Breast epithelium (tissue), 4 donors: ENCODE measurements at regions of chr14 and their contacts with region 1.

Region 1: GRCh38 chr14:105248368-105248756 is at the start of gene BTBD6:
- DNase-seq: peak; percentile 74 to 82
- H3K4me3 ChIP-seq: peak within 1 kb of the TSS; percentile 51 to 88 (median 67)
- H3K27ac ChIP-seq: peak within 1 kb of the TSS; percentile 87 to 99
- H3K4me1 ChIP-seq: peaks cover 8 to 10% of the 10 kb centered on the region in 2 donors
- H3K27me3 ChIP-seq: no peaks in the 10 kb centered on the region
- CTCF ChIP-seq: no peak
- POLR2A ChIP-seq: no peak
- total RNA-seq, gene BTBD6: 37.0 to 86.1 (median 41.0) TPM

Region 2: DNA sequence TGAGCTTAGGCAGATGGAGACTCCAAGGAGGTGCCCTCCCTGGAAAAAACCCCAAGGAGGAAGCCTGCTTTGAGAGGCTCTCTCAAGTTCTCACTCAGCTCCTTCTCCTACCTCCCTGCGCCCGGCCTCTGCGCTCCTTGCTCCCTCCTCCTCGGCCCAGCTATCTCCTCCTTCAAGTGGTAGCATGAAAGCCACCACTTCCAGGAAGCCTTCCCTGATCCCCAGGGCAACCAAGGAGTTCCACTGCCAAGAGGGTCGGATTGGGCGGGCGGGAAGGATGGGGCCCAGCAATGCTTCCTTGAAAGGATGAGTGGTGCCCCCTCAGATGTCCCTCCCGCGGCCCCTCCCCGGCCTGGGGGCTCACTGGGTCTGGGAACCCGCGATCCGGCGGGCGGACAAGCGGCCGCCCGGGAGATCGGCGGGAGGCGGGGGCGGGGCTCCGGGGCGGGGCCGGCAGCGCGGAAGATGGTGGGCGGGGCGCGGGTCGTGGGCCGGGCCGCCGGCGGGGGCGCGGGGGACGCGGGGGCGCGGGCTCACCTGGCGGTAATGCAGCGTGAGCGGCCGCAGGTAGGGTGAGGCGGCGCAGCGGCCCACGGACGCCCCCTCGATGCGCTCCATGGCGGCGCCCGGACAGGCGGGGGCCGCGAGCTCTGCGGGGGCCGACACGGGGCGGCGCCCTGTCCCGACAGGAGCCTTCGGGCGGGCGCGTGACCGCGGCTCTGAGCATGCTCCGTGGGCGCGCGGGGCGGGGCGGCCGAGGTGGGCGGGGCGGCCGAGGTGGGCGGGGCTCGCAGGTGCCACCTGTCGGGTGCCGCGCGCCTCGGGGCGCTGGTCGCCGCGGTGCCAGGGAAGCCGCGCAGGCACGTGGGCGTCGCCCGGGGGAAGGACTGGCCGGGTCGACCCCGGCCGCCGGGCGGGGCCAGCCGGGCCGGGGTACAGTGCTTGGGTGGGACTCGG is 67.5 kb before region 1 on chr14 and contains the start of gene NUDT14:
- intact Hi-C with region 1: loop called (anchors 2 kb)
- DNase-seq: peak; percentile 83 to 89
- H3K4me3 ChIP-seq: peak within 1 kb of the TSS; percentile 37 to 83 (median 60)
- H3K27ac ChIP-seq: peak within 1 kb of the TSS; percentile 58 to 83
- H3K4me1 ChIP-seq: no peaks in the 10 kb centered on the region
- H3K27me3 ChIP-seq: no peaks in the 10 kb centered on the region
- CTCF ChIP-seq: no peak
- POLR2A ChIP-seq: no peak
- total RNA-seq, gene NUDT14: 13.6 to 14.9 (median 14.1) TPM

Region 3: DNA sequence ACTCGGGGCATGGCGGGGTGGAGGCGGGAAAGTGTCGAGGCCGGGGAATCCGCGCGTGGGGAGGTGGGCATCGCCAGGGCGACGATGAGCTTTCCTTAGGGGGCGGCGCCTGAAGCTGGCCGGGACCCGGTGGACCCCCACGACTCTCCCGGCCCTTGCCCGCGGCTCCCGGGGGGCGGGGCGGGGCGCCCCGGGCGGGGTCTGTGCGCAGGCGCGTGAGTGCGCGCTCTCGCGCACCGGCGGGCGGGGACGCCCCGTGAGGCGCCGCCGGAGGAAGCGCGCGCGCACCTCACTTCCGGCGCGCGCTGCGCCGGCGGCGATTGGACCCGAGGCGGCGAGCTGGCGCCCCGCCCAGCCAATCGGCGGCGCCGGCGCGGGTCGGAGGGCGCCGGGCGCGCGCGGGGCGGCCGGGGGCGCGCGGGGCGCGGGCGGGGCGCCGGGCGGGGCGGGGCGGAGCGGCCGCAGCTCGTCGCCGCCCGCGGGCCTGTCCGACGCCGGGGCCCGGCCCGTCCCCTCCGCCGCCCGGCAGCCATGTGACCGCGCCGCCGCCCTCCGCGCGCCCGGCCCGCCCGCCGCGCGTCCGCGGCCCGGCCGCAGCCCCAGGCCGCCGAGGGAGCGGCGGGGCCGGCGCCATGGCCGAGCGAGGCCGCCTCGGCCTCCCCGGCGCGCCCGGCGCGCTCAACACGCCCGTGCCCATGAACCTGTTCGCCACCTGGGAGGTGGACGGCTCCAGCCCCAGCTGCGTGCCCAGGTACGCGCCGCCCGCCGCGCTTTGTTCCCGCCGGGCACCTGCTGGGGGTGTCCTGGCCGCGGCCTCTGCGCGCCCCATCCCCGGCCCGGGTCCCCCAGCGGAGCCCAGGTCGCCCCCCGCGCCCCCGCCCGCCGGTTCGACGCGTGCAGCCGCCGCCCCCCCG is 66.2 kb after region 1 on chr14 and contains the start of gene PACS2:
- intact Hi-C with region 1: loop called (anchors 10 kb)
- DNase-seq: peak in 1 of 2 donors; percentile 30
- H3K4me3 ChIP-seq: peak within 1 kb of the TSS; percentile 67 to 99 (median 77)
- H3K27ac ChIP-seq: peak within 1 kb of the TSS; percentile 93 to 98
- H3K4me1 ChIP-seq: peaks cover 10 to 21% of the 10 kb centered on the region in 2 donors
- H3K27me3 ChIP-seq: no peaks in the 10 kb centered on the region
- CTCF ChIP-seq: no peak
- POLR2A ChIP-seq: no peak
- total RNA-seq, gene PACS2: 46.0 to 70.9 (median 67.8) TPM